ENCODE measurements at regions of chr20 and their contacts with region 1.

Region 1: DNA sequence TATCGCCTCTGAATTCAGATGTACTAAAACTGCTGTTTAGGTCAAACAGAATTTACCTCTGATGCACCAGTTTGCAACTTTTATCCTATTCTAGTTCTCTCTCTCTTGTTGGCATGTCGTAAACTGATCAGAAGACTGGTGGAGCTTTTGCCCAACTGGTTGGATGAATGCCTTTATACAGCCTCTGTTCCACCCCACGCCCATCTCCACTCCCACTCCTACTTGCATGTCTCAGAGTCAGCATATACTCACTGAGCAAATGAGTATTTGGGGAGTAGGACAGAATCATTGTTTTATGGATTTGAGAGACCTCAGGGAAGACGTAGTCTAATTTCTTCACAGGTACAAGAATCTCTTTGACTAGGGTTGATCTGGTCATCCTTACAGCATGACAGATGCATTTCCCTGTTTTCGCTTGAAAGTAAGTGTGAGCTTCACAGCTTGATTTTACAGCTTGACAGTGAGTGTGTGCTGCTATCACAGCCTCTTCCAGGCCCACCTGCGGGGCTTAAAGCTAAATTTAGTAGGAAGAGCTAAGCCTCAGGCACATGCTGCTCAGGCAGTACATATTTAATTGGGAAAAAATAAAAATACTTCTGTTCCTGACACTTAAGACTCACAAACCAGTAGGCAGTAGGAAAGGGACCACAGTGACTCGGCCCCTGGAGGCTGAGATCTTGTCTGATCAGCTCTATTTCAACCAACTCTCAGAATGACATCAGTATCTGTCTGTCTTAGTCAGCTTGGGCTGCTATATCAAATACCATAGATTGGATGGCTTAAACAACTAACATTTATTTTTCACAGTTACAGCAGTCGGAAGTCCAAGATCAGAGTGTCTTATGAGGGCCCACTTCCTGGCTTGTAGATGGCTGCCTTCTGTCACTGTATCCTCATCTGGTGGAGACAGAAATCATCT is 30.4 kb downstream of the TRMT6 start:
- DNase-seq: no peak
- H3K4me3 ChIP-seq: no peak overlapping the region
- H3K27ac ChIP-seq: no peak overlapping the region
- H3K4me1 ChIP-seq: no peaks in the 10 kb centered on the region
- H3K27me3 ChIP-seq: peaks cover 12% of the 10 kb centered on the region
- CTCF ChIP-seq: no peak

Region 2: DNA sequence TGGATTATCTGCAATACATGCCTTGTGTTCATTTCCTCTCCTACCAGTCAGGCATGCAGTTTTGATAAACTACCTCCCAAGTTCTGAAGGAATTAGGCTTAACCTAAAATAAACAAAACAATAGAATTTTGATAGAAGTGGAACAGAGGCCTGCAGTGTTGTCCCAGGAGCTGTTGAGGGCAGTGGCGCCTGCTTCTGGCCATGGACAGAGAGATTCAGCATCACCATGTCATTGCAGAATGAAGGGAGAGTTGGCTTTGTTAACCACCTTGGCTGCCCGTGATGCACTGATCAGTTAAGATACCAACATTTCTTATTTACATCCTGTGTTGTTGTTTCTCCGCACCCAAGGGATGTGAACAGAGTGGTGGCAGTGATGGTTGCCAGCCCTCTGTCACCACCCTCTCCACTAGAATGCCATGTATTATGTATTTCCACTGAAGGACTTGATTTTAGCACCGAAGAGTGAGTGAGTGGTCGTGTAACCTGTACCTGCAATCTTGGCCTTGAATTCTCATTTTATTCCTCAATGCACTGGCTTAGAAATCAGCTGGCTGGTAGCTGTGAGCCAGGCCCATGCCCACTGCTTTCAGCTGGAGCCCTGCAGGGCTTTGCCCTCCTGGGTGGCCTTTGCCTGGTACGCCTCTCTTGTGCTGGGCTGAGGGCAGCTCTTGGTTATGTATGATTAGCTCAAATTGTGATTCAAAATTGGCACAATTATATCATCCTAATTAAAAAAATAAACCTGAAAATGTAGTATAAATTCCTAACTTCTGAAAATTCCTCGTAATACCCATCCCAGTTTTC is 113.2 kb before region 1 on chr20:
- intact Hi-C with region 1: loop called (anchors 10 kb)
- DNase-seq: no peak
- H3K4me3 ChIP-seq: no peak overlapping the region
- H3K27ac ChIP-seq: no peak overlapping the region
- H3K4me1 ChIP-seq: peaks cover 27% of the 10 kb centered on the region
- H3K27me3 ChIP-seq: no peaks in the 10 kb centered on the region
- CTCF ChIP-seq: peak; percentile 35

Region 3: GRCh38 chr20:5945963-5946362 is 26.1 kb after region 1 on chr20:
- intact Hi-C with region 1: no loop called
- DNase-seq: no peak
- H3K4me3 ChIP-seq: no peak overlapping the region
- H3K27ac ChIP-seq: no peak overlapping the region
- H3K4me1 ChIP-seq: peaks cover 18% of the 10 kb centered on the region
- H3K27me3 ChIP-seq: no peaks in the 10 kb centered on the region
- CTCF ChIP-seq: no peak